Naive thymus-derived CD4-positive, alpha-beta T cell (primary cell): ENCODE measurements at regions of chr16 and their contacts with region 1.

Region 1: GRCh38 chr16:64478252-64478906 is 643.5 kb downstream of the CDH11 start:
- DNase-seq: no peak
- ATAC-seq: no peak
- H3K4me3 ChIP-seq: no peak overlapping the region
- H3K4me3 Mint-ChIP-seq: no peak overlapping the region
- H3K27ac ChIP-seq: no peak overlapping the region
- H3K27ac Mint-ChIP-seq: no peak overlapping the region
- H3K4me1 ChIP-seq: no peaks in the 10 kb centered on the region
- H3K4me1 Mint-ChIP-seq: no peaks in the 10 kb centered on the region
- H3K27me3 ChIP-seq: no peaks in the 10 kb centered on the region
- H3K27me3 Mint-ChIP-seq: no peaks in the 10 kb centered on the region

Region 2: GRCh38 chr16:64416216-64417005 is 62.0 kb before region 1 on chr16:
- CTCF ChIA-PET with region 1: no interaction called
- POLR2A ChIA-PET with region 1: no interaction called
- intact Hi-C with region 1: loop called in 1 of 2 experiments (anchors 10 kb)
- DNase-seq: no peak
- ATAC-seq: no peak
- H3K4me3 ChIP-seq: no peak overlapping the region
- H3K4me3 Mint-ChIP-seq: peak overlapping the region in 3 of 10 donors; percentile 9 to 54 (median 28)
- H3K27ac ChIP-seq: no peak overlapping the region
- H3K27ac Mint-ChIP-seq: no peak overlapping the region
- H3K4me1 ChIP-seq: no peaks in the 10 kb centered on the region
- H3K4me1 Mint-ChIP-seq: peaks cover 0 to 3% (median 0%) of the 10 kb centered on the region in 7 donors
- H3K27me3 ChIP-seq: no peaks in the 10 kb centered on the region
- H3K27me3 Mint-ChIP-seq: no peaks in the 10 kb centered on the region